Activated CD8-positive, alpha-beta T cell treated with anti-CD3 and anti-CD28 coated beads, Interleukin-2, amount 10 ng/mL, durations not matched to agents 7 days and 5 days (primary cell): ENCODE measurements at regions of chr10 and their contacts with region 1.

Region 1: GRCh38 chr10:45580371-45581215 is 92.0 kb downstream of the ZFAND4 start:
- DNase-seq: peak; percentile 31
- ATAC-seq: peak; percentile 73
- H3K4me3 Mint-ChIP-seq: peak overlapping the region; percentile 84
- H3K27ac Mint-ChIP-seq: peak overlapping the region; percentile 97
- H3K4me1 Mint-ChIP-seq: peaks cover 30% of the 10 kb centered on the region
- H3K27me3 Mint-ChIP-seq: no peaks in the 10 kb centered on the region

Region 2: DNA sequence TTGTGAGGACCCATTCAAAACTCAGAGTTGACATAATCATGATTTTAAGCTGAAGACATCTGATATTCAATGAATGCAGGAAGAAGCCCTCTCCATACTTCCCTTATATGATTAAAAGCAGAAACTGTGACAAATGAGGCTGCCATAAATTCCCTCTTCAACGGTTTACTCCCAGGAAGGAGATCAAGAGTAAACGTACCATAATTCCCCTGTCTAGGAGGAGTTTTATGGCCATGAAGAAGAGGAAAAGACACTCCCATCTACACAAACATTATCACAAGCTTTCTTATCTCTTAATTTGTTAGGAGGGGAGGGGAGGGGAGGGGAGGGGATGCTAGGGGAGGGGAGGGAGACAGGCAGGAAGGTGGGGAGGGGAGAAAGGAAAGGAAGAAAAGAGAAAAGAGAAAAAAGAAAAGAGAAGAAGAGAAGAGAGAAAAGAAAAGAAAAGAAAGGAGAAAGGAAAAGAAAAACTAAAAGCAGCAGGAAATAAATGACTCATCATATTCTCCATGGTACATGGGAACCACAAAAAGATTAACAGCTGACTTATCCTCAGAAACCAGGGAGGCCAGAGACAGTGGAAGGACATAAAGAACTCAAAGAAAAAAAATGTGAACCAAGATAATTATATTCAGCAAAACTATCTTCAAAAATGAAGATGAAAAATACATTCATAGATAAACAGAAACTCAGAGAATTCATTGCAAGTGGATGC is 85.0 kb before region 1 on chr10:
- CTCF ChIA-PET with region 1: no interaction called
- POLR2A ChIA-PET with region 1: no interaction called
- DNase-seq: no peak
- ATAC-seq: no peak
- H3K4me3 Mint-ChIP-seq: no peak overlapping the region
- H3K27ac Mint-ChIP-seq: no peak overlapping the region
- H3K4me1 Mint-ChIP-seq: peaks cover 7% of the 10 kb centered on the region
- H3K27me3 Mint-ChIP-seq: no peaks in the 10 kb centered on the region

Region 3: GRCh38 chr10:45594276-45595106 is 13.9 kb after region 1 on chr10:
- CTCF ChIA-PET with region 1: interaction called, 18 read pairs
- POLR2A ChIA-PET with region 1: interaction called, 11 read pairs
- DNase-seq: peak; percentile 93
- ATAC-seq: peak; percentile 91
- H3K4me3 Mint-ChIP-seq: peak overlapping the region; percentile 86
- H3K27ac Mint-ChIP-seq: peak overlapping the region; percentile 75
- H3K4me1 Mint-ChIP-seq: peaks cover 34% of the 10 kb centered on the region
- H3K27me3 Mint-ChIP-seq: peaks cover 5% of the 10 kb centered on the region

Region 4: GRCh38 chr10:45672181-45673073 is 91.8 kb after region 1 on chr10 and contains the start of gene ZFAND4:
- CTCF ChIA-PET with region 1: interaction called, 11 read pairs
- POLR2A ChIA-PET with region 1: interaction called, 5 read pairs
- DNase-seq: peak; percentile 97
- ATAC-seq: peak; percentile 98
- H3K4me3 Mint-ChIP-seq: peak within 1 kb of the TSS; percentile 85
- H3K27ac Mint-ChIP-seq: peak within 1 kb of the TSS; percentile 89
- H3K4me1 Mint-ChIP-seq: peaks cover 29% of the 10 kb centered on the region
- H3K27me3 Mint-ChIP-seq: no peaks in the 10 kb centered on the region
- total RNA-seq, gene ZFAND4: 23.2 to 23.3 TPM

Region 5: DNA sequence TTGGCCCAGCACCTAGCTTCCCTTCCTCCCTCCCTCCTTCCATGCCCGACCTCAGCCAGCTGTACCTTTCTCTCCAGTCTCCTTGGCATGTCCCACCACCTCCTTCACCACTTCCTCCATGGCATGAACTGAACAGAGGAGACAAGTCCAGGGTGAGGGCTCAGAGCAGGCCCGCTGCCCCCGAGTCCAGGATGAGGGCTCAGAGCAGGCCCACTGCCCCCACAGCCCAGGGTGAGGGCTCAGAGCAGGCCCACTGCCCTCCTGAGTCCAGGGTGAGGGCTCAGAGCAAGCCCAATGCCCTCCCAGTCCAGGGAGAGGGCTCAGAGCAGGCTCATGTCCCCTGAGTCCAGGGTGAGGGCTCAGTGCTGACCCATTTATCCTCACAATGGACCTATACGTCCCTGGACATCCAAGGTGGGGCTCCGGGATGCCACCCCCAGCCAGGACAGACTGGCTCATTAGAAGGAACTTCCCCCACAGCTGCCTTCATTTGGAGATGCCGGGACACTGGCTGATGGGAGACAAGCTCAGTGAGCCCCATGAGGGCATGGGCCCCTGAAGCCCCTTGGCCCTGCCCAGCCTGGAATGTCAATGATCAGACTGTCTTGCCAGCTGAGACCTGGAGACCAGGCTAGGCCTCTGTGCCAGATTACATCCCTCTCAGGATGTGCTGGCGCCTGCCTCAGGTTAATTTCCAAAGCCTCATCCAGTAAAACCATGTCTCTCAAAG is 236.7 kb after region 1 on chr10:
- CTCF ChIA-PET with region 1: no interaction called
- POLR2A ChIA-PET with region 1: no interaction called
- DNase-seq: no peak
- ATAC-seq: no peak
- H3K4me3 Mint-ChIP-seq: no peak overlapping the region
- H3K27ac Mint-ChIP-seq: no peak overlapping the region
- H3K4me1 Mint-ChIP-seq: peaks cover 5% of the 10 kb centered on the region
- H3K27me3 Mint-ChIP-seq: no peaks in the 10 kb centered on the region